BJ (cell line): ENCODE measurements at regions of chr6 and their contacts with region 1.

Region 1: DNA sequence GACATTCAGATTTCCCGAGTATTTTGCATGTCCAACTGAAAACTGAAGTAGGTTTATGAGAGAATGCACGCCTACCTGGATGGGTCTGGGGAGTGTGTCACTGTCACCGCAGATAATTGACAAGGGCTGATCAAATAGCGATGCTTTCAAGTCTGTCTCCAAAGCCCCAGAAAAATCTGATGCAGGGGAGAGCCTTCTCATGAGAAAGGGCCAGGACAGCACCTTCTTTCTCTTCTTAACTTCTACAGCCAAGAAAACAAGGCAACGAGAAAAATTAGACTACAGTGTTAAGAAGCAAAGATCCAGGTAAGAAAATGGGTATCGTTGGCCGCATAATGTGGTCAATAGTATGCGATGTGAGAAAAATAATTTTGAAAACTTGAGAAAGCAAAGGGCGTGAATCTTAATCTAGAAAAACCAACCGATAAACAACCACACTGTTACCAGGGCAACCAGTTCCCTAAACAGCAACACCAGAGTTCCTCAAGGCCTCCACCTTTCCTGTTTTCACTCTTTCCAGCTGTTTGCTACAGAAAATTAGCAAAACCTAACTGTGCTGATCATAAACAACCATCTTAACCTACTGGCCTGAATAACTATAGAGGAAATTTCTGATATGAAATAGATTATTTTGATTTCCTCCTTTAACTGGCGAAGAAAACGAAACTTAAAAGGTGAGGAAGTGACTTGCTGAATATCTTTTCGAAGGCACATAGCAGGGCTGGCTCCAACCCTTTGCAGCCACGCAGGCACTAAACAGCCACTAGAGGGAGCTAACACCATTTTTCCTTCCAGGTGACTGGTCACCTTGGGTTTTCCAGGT is 2.6 kb downstream of the TAGAP start:
- DNase-seq: no peak
- H3K4me3 ChIP-seq: no peak overlapping the region
- H3K27me3 ChIP-seq: peaks cover 9% of the 10 kb centered on the region
- CTCF ChIP-seq: peak; percentile 94

Region 2: DNA sequence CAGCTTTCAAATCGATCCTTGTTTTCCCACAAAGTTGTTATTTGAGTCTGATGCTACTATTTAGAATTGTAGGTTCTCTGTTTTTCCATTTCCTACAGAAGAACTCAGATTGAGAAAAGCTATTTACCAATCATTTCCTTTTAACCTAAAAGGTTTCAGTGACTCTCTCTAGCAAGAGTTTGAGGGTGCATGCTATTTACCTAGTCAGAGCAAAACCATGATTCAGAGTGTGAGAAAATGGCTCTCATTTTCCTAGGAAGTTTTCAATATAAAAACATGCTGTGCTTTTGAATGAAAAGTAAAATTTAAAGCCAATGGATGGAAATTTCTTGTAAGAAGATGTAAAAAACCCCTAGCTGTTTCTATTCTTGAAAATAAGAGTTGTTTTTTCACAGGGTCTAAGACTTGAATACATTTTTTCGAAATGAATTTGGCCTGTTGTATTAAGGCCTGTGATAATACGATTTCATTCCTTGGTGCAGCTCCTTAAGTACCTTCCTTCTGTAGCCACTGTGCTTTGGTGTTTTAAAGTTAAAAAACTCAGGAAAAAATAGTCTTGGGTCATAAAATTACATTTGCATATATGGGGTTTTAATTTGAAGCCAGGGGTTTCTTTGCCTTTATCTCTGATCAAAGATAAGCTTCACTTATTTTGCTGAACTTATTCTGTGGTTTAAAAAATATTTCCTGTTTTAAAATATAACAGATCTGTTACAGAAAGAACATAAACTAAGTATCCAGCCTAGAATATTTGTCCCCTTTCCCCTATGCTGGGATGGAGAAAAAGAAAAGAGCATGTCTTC is 24.3 kb before region 1 on chr6:
- CTCF ChIA-PET with region 1: interaction called, 11 read pairs
- POLR2A ChIA-PET with region 1: no interaction called
- DNase-seq: no peak
- H3K4me3 ChIP-seq: no peak overlapping the region
- H3K27me3 ChIP-seq: 0 out of 2 replicates have a peak, but pooled peaks cover 2% of the 10 kb centered on the region
- CTCF ChIP-seq: no peak

Region 3: GRCh38 chr6:159053781-159054398 is 11.7 kb after region 1 on chr6:
- CTCF ChIA-PET with region 1: interaction called, 28 read pairs
- POLR2A ChIA-PET with region 1: no interaction called
- DNase-seq: no peak
- H3K4me3 ChIP-seq: no peak overlapping the region
- H3K27me3 ChIP-seq: peaks cover 5% of the 10 kb centered on the region; the same call in 1 of the 2 replicates
- CTCF ChIP-seq: no peak

Region 4: DNA sequence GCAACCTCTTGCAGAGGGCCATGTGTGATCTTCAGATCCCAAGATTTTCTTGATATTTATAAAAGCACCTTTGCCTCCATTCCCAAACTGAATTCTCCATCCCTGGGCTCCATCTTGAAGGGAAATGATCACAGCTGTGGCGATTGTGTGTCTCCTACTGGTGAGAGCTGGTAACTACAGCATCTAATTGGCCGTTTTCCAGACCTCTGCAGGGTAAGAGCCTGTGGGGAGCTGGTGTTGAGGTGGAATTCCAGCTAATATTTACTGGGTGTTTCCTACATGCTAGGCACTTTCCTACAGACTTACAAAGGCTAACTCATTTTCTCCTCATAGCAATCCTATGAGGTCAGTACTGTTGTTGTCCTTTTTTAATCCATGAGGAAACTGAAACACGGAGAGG is 67.8 kb after region 1 on chr6:
- CTCF ChIA-PET with region 1: interaction called, 33 read pairs
- POLR2A ChIA-PET with region 1: no interaction called
- DNase-seq: peak; percentile 25
- H3K4me3 ChIP-seq: no peak overlapping the region
- H3K27me3 ChIP-seq: no peaks in the 10 kb centered on the region; the same call in 1 of the 2 replicates
- CTCF ChIP-seq: peak; percentile 76

Region 5: GRCh38 chr6:159134701-159135364 is 92.6 kb after region 1 on chr6:
- CTCF ChIA-PET with region 1: interaction called, 42 read pairs
- POLR2A ChIA-PET with region 1: no interaction called
- DNase-seq: no peak
- H3K4me3 ChIP-seq: no peak overlapping the region
- H3K27me3 ChIP-seq: peaks cover 1% of the 10 kb centered on the region; the same call in 1 of the 2 replicates
- CTCF ChIP-seq: peak; percentile 97